T-cell (primary cell): ENCODE measurements at regions of chr11 and their contacts with region 1.

Region 1: DNA sequence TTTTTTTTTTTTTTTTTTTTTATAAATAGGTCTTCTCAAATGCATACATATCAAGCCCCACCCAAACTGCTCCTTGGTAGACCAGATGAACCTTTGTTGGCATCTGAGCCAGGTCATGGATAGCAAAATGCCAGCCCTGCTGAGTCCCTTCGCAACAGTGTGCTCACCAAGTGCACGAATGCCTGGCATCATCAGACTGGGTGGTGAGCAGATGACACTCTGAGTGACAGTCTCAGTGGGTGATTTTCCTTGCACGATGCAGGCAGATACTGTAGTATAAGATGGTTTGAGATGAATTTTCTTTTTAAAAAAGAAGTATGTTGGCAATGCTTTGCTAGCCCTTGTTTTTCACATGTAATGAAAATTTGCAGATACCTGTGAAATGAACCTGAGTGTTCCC is 74.0 kb downstream of the RCN1 start:
- DNase-seq: no peak
- ATAC-seq: no peak
- H3K4me3 ChIP-seq: no peak overlapping the region
- H3K4me3 Mint-ChIP-seq: no peak overlapping the region
- H3K27ac ChIP-seq: no peak overlapping the region
- H3K27ac Mint-ChIP-seq: no peak overlapping the region
- H3K4me1 ChIP-seq: peaks cover 5 to 11% of the 10 kb centered on the region in 2 experiments
- H3K4me1 Mint-ChIP-seq: peaks cover 11 to 18% (median 16%) of the 10 kb centered on the region in 3 donors
- H3K27me3 ChIP-seq: peaks cover 0 to 5% of the 10 kb centered on the region in 2 experiments
- H3K27me3 Mint-ChIP-seq: peaks cover 0 to 6% of the 10 kb centered on the region in 2 donors

Region 2: DNA sequence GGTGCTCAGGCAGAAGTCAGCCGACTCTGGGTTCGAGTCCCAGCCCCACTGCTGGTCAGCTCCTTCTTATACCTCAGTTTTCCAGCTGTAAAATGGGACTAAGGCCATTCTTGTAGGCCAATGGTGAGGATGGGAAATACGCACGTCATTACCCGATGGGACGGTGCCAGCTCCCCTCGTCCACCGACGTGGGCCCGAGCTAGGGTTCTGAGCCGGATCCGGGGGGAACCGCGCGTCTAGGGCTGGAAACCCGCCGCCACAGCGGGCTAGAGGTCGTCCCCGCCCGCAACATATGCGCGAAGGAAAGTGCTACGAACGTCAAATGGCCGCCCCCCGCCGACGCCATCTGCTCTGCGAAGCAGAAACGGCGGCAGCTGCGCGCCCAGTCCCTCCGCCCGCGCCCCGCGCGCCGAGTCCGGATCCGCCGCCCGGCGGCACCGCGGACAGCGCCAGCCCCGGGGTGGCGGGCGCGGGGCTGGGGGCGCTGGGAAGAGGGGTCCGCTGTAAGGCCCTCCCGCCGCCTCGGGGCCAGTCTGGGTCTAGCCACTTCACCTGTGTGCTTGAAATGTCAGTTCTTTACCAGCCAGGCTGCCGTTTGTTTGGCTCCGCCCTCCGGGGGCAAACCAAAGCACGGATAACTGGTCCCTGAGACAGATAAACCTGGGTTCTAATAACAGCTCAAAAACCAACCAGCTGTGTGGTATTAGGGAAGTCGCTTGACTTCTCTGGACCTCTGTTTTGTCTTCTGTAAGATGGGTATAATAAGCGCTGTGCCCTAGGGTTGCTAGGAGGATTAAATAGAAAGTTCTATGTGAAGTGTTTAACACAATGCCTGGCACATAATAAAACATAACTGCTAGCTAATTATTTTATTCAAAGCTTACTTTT is 177.5 kb before region 1 on chr11:
- CTCF ChIA-PET with region 1: no interaction called
- POLR2A ChIA-PET with region 1: no interaction called
- DNase-seq: no peak
- ATAC-seq: no peak
- H3K4me3 ChIP-seq: no peak overlapping the region
- H3K4me3 Mint-ChIP-seq: no peak overlapping the region
- H3K27ac ChIP-seq: no peak overlapping the region
- H3K27ac Mint-ChIP-seq: no peak overlapping the region
- H3K4me1 ChIP-seq: peaks cover 0 to 3% of the 10 kb centered on the region in 2 experiments
- H3K4me1 Mint-ChIP-seq: peaks cover 0 to 6% (median 2%) of the 10 kb centered on the region in 3 donors
- H3K27me3 ChIP-seq: peaks cover 9 to 32% of the 10 kb centered on the region in 2 experiments
- H3K27me3 Mint-ChIP-seq: peaks cover 43 to 50% of the 10 kb centered on the region in 2 donors

Region 3: DNA sequence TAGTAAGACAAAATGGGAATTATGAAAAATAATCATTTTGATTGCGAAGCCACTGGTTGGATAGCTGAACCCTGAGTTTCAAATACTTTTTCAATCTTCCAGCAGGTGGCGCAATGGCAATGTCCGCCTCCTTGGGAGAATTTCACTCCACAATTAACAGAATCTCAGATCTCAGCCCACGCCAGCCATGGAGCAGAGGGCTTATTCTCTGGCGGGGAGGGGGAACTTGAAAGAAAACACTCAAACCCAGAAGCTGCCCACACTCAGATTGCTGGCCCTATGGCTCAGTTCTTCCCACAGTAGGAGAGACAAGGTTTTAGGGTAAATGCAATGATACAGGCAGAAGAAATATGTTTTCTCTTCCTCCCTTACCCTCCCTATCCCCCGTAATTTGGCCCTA is 112.6 kb before region 1 on chr11:
- CTCF ChIA-PET with region 1: interaction called, 3 to 19 read pairs
- POLR2A ChIA-PET with region 1: no interaction called
- DNase-seq: peak in 30 of 35 experiments; percentile 2 to 73 (median 33)
- ATAC-seq: peak in 1 of 4 experiments; percentile 36
- H3K4me3 ChIP-seq: no peak overlapping the region
- H3K4me3 Mint-ChIP-seq: no peak overlapping the region
- H3K27ac ChIP-seq: no peak overlapping the region
- H3K27ac Mint-ChIP-seq: no peak overlapping the region
- H3K4me1 ChIP-seq: peaks cover 0 to 3% of the 10 kb centered on the region in 2 experiments
- H3K4me1 Mint-ChIP-seq: no peaks in the 10 kb centered on the region
- H3K27me3 ChIP-seq: peaks cover 0 to 8% of the 10 kb centered on the region in 2 experiments
- H3K27me3 Mint-ChIP-seq: peaks cover 34 to 42% of the 10 kb centered on the region in 2 donors

Region 4: DNA sequence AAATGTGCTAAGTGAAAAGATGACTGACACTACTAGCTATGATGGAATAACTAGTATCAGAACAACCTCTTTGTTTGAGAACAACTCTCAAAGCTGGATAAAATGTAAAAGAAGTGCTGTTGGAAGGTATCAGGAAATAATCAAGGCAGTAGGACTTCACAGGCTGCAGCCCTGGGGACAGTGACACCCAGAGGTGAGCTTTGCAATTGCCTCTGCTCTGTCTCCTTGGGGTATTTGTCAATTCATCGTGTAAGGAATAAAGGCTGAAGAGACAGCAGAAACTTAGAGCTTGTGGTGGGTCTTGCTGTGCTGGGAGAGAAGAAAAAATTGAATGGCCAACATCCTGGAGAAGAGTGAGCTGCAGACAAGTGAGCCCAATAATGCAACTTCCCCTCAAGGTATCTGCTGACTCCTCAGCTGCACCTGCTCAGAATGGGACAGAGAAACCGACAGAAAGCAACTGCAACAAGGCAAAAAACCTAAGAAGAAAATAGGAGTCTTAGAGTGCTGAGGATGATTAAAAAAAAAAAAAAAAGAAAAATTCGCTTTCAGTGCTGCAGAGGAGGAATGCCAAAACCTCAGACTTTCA is 67.2 kb after region 1 on chr11:
- CTCF ChIA-PET with region 1: no interaction called
- POLR2A ChIA-PET with region 1: no interaction called
- DNase-seq: peak in 1 of 35 experiments; percentile 6
- ATAC-seq: no peak
- H3K4me3 ChIP-seq: no peak overlapping the region
- H3K4me3 Mint-ChIP-seq: no peak overlapping the region
- H3K27ac ChIP-seq: no peak overlapping the region
- H3K27ac Mint-ChIP-seq: no peak overlapping the region
- H3K4me1 ChIP-seq: no peaks in the 10 kb centered on the region
- H3K4me1 Mint-ChIP-seq: peaks cover 0 to 4% (median 0%) of the 10 kb centered on the region in 3 donors
- H3K27me3 ChIP-seq: peaks cover 0 to 3% of the 10 kb centered on the region in 2 experiments
- H3K27me3 Mint-ChIP-seq: peaks cover 18 to 27% of the 10 kb centered on the region in 2 donors

Region 5: DNA sequence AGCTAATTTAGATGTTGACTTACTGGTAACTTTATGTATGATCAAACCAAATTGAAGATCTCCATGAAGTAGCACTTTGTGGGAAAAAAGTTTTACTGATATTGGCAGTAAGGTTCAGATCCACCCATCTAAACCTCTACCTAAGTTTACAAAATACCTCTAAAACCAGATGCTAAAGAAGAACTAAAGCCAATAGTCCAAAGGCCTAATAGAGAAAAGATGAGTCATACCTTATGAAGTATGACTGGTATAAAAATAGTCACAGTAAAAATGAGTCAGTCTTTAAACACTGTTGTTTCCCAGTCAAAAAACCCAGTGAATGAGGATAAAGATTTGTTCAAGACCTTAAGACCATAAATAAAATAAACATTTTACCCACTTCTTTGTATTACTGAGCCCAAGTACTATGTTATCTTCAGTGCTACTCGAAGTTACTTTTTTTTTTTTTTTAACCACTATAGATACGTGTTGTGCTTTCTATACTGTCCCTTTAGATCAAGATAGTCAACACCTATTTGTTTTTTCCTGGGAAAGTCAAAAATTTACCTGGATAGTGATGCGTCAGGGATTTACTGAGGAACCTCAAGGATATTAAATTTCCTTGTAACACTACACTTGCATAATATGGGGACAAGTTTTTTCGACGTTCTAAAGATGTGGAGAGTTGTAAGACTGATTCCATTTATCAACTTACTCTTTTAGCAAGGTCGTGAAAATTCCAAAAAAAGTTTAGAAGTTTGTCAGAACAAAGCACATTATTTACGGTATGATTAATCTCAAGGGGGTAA is 542.3 kb after region 1 on chr11:
- CTCF ChIA-PET with region 1: no interaction called
- POLR2A ChIA-PET with region 1: no interaction called
- DNase-seq: no peak
- ATAC-seq: no peak
- H3K4me3 ChIP-seq: no peak overlapping the region
- H3K4me3 Mint-ChIP-seq: no peak overlapping the region
- H3K27ac ChIP-seq: no peak overlapping the region
- H3K27ac Mint-ChIP-seq: no peak overlapping the region
- H3K4me1 ChIP-seq: no peaks in the 10 kb centered on the region
- H3K4me1 Mint-ChIP-seq: no peaks in the 10 kb centered on the region
- H3K27me3 ChIP-seq: peaks cover 0 to 14% of the 10 kb centered on the region in 2 experiments
- H3K27me3 Mint-ChIP-seq: peaks cover 20 to 33% of the 10 kb centered on the region in 2 donors